ENCODE measurements at regions of chr20 and their contacts with region 1.

Region 1: GRCh38 chr20:50987592-50988210 is 29.1 kb downstream of the MOCS3 start:
- DNase-seq: peak; percentile 89
- H3K4me3 ChIP-seq: no peak overlapping the region
- H3K27ac ChIP-seq: peak overlapping the region; percentile 20
- H3K27me3 ChIP-seq: no peaks in the 10 kb centered on the region
- CTCF ChIP-seq: peak; percentile 90

Region 2: DNA sequence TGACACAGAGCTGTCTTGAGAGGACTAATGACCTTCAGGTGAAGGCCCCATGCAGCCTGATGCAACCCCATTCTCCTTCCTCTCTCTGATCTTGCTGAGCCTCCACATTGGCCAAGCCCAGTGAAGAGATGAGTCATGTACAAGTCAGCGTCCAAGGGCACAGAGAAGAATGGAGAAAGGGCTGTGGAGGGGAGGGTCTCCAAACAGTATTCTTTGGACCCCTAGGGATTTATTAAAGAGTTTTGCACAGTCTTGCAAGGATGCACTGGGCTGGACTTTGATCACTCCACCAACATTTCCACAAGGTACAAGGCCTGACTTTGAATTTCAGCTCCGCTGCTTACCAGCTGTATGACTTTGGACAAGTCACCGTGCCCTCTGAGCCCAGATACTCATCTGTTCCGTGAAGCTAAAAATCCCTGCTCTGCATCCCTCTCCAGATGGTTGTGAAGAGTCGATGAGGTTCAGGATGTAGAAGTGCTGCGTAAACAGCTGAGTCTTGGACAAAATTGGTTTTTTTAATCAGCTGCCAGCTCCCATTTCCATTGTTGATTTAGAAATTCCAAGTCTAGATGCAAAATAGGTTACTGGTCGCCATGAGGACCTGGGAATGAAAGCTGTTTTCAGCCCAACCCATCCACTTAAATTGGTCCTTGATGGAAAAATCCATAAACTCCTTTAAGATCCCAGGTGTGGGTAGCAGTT is 49.3 kb after region 1 on chr20:
- in situ Hi-C with region 1: no loop called
- DNase-seq: no peak
- H3K4me3 ChIP-seq: no peak overlapping the region
- H3K27ac ChIP-seq: no peak overlapping the region
- H3K27me3 ChIP-seq: no peaks in the 10 kb centered on the region
- CTCF ChIP-seq: no peak

Region 3: GRCh38 chr20:51095633-51096513 is 108.2 kb after region 1 on chr20:
- in situ Hi-C with region 1: no loop called
- DNase-seq: no peak
- H3K4me3 ChIP-seq: no peak overlapping the region
- H3K27ac ChIP-seq: no peak overlapping the region
- H3K27me3 ChIP-seq: peaks cover 12% of the 10 kb centered on the region
- CTCF ChIP-seq: no peak

Region 4: DNA sequence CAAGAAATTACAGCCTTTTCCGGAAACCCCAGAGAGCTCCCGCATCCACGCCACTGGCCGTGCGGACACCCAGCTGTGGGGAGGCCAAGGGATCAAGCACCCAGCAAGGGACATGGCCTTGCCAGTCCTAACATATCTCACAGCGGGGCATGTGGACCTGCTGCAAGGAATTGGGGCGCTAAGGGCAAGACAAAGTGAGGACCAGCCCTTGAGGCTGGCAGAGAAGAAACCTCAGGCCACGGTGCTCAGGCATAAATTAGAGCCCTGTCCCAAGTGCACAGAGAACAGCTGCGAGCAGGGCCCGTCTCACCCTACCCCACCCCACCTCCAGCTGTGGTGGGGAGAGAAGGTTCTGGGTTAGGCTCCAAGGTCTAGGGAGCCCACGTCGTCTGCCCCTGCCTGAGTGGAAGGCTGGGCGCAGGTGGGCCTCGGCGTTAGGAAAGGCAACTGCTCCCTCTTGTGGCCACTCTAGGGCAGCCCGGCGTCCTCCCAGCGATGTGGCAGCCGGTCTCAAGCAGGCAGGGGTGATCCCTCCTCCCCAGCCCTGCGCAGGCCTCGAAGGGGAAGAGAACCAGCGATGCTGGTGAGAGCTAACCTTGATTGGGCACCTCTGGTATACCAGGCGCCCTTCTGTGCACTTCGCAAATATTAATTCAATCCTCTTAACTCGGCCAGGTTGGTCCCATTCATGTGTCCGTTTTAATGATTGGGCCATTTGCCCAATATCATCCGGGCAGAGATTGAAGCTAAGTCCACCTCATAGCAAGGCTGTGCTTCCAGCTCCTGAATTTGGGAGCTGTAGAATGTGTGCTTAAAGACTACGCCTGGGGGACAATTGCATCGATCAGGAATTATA is 319.0 kb after region 1 on chr20:
- in situ Hi-C with region 1: loop called (anchors 25 kb)
- DNase-seq: peak; percentile 69
- H3K4me3 ChIP-seq: no peak overlapping the region
- H3K27ac ChIP-seq: no peak overlapping the region
- H3K27me3 ChIP-seq: no peaks in the 10 kb centered on the region
- CTCF ChIP-seq: peak; percentile 96